ENCODE measurements at regions of chr9 and their contacts with region 1.

Region 1: GRCh38 chr9:18255158-18255629 is 218.8 kb upstream of the ADAMTSL1 start:
- DNase-seq: peak; percentile 88
- ATAC-seq: peak; percentile 66
- H3K4me3 ChIP-seq: no peak overlapping the region
- H3K27ac ChIP-seq: peak overlapping the region; percentile 71
- H3K4me1 ChIP-seq: peaks cover 26% of the 10 kb centered on the region
- H3K27me3 ChIP-seq: no peaks in the 10 kb centered on the region
- CTCF ChIP-seq: peak; percentile 90

Region 2: GRCh38 chr9:18238254-18238653 is 16.9 kb before region 1 on chr9:
- CTCF ChIA-PET with region 1: interaction called, 3 read pairs
- POLR2A ChIA-PET with region 1: no interaction called
- intact Hi-C with region 1: loop called (anchors 1 kb)
- DNase-seq: peak; percentile 86
- ATAC-seq: peak; percentile 86
- H3K4me3 ChIP-seq: peak overlapping the region; percentile 51
- H3K27ac ChIP-seq: peak overlapping the region; percentile 99
- H3K4me1 ChIP-seq: peaks cover 55% of the 10 kb centered on the region
- H3K27me3 ChIP-seq: no peaks in the 10 kb centered on the region
- CTCF ChIP-seq: no peak

Region 3: GRCh38 chr9:18274693-18275092 is 19.5 kb after region 1 on chr9:
- CTCF ChIA-PET with region 1: no interaction called
- POLR2A ChIA-PET with region 1: no interaction called
- intact Hi-C with region 1: no loop called
- DNase-seq: peak; percentile 14
- ATAC-seq: no peak
- H3K4me3 ChIP-seq: no peak overlapping the region
- H3K27ac ChIP-seq: no peak overlapping the region
- H3K4me1 ChIP-seq: no peaks in the 10 kb centered on the region
- H3K27me3 ChIP-seq: no peaks in the 10 kb centered on the region
- CTCF ChIP-seq: no peak

Region 4: DNA sequence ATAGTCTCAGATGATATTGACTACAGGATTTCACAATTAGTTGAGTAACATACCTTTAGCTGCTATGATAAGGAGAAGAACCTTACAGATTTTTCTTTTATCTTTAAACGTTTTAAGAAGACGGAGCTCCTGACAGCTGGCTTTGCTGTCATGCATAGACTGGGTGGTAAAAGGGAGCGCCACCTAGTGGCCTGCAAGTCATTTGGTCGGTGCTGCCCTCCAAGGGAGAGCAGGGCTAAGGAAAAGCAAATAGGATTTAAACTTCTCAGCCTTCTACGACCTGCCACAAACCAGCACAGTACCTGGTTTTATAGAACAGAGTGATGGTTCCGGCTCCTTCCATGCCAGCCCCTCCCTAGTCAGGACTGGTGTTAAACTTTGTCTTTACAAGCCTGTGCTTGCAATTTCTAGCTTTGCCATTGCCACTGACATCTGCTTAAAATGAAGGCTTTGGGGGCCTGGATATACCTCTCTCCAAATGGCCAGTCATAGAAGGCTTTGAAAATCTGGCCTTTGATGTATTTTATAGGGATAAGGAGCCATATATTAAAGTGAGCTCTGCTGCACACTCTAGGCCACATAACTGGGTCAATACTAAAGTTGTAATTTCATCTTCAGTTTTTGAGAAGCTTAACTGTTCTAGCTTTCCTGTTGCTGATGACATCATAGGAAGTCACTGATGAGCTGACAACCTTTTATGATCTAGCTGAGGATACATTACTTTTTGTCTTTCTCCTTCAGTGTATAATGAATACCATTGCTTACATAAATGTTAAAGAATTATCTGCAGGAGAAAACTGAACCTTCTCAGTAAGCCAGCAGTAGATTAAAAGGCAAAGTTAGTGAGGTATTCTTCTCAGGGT is 187.7 kb after region 1 on chr9:
- CTCF ChIA-PET with region 1: interaction called, 4 read pairs
- POLR2A ChIA-PET with region 1: no interaction called
- intact Hi-C with region 1: loop called (anchors 1 kb)
- DNase-seq: peak; percentile 71
- ATAC-seq: peak; percentile 97
- H3K4me3 ChIP-seq: no peak overlapping the region
- H3K27ac ChIP-seq: no peak overlapping the region
- H3K4me1 ChIP-seq: peaks cover 17% of the 10 kb centered on the region; the same call in 1 of the 2 replicates
- H3K27me3 ChIP-seq: no peaks in the 10 kb centered on the region
- CTCF ChIP-seq: peak; percentile 91

Region 5: DNA sequence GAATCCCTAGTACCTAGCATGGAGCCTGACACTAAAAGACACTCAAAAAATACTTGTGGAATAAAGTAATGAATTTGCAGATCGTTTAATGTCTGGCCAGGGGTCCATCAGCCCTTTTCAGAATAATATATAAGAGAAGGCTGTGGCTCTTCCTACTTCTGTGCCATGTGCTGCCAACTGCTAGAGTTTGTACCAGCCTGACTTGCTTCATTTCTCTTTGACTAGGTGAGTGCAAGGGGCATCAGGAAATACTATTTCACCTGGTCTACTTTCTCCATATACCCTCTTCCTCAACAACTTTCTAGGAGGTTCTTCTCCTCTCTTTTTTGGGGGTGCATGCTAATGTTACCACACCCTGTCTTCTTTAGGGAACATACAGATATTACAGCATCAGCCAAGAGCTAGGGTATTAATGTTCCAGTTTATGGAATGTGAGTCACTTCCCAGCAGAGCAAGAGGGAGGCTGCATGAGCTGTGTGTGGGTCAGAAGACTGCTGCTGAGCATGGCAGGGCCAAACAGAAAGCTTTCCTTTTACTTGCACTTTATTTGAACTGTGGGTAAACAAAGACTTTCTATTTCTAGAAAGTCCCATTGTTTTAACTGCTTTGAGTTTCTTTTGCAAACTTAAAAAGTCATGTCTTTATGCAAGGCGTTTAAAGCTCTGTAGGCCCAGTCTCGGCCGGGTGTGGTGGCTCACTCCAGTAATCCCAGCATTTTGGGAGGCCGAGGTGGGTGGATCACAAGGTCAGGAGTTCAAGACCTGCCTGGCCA is 377.6 kb after region 1 on chr9:
- CTCF ChIA-PET with region 1: no interaction called
- POLR2A ChIA-PET with region 1: no interaction called
- intact Hi-C with region 1: loop called (anchors 2 kb)
- DNase-seq: peak; percentile 82
- ATAC-seq: peak; percentile 100
- H3K4me3 ChIP-seq: no peak overlapping the region
- H3K27ac ChIP-seq: peak overlapping the region; percentile 90
- H3K4me1 ChIP-seq: peaks cover 18% of the 10 kb centered on the region
- H3K27me3 ChIP-seq: no peaks in the 10 kb centered on the region
- CTCF ChIP-seq: no peak

Region 6: DNA sequence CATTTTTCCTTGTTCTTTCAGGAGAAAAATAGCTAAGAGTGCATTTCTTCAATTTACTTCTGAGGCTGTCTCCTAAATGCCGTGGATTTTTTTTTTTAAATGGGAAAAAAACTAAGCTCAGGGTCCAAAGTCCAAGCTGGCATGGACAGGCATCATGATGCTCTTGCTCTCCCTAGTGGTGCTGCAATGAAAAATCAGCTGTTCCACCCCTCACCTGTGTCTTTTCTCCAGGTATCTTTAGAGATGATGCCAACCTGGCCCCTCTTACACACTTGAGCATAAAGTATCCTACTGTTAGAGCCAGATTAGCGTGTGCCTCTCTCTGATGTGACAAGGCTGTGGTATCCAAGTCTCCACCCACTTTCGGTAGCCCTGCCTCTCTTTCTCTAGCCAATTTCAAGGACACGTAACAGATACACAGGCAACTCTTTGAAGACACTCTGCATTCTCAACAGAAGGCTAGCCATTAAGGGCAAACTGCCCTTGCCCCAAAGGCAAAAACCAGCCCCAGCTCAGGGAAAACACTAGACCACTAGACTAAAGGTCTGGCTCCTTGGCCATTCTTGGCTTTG is 569.0 kb after region 1 on chr9:
- CTCF ChIA-PET with region 1: interaction called, 12 read pairs
- POLR2A ChIA-PET with region 1: no interaction called
- intact Hi-C with region 1: loop called (anchors 1 kb)
- DNase-seq: peak; percentile 66
- ATAC-seq: peak; percentile 52; the same call in 1 of the 2 replicates
- H3K4me3 ChIP-seq: no peak overlapping the region
- H3K27ac ChIP-seq: no peak overlapping the region
- H3K4me1 ChIP-seq: peaks cover 21% of the 10 kb centered on the region
- H3K27me3 ChIP-seq: no peaks in the 10 kb centered on the region
- CTCF ChIP-seq: peak; percentile 71

Region 7: DNA sequence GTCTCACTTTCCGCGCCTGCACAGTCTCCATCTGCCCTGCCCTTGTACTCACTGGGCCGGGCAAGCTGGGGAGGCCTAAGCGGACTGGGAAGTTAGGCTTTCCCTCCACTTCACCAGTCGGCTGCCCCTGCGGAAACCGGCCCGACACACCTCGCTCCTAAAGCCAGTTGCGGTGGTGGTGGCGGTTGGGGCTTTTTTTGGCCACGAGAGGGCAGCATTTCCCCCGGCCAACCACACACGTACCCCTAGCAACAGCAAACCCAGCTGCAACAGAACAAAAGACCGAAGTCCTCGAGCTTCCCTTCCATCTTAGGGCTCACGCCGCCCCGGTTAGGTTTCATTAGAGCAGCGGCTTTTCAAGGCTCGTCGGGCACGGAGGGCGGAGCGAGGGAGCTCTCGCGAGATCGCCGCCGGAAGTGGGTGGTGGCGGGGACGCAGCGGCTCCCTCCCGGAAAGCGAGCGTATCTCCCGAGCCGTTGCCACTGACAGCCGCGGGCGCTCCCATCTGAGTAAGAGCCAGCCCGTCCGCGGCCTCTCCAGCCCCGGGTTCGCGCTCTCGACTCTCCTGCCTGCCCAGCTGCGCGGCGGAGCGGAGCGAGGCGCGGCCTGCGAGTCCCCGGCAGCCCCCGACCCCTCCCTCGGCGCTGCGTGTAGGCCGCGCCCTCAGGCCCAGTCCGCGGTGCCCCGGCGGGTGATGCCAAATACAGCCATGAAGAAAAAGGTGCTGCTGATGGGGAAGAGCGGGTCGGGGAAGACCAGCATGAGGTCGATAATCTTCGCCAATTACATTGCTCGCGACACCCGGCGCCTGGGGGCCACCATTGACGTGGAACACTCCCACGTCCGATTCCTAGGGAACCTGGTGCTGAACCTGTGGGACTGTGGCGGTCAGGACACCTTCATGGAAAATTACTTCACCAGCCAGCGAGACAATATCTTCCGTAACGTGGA is 794.0 kb after region 1 on chr9 and contains the start of gene RRAGA:
- CTCF ChIA-PET with region 1: no interaction called
- POLR2A ChIA-PET with region 1: interaction called, 10 read pairs
- intact Hi-C with region 1: no loop called
- DNase-seq: peak; percentile 92
- ATAC-seq: peak; percentile 83
- H3K4me3 ChIP-seq: peak within 1 kb of the TSS; percentile 89
- H3K27ac ChIP-seq: peak within 1 kb of the TSS; percentile 68
- H3K4me1 ChIP-seq: peaks cover 15% of the 10 kb centered on the region; the same call in 1 of the 2 replicates
- H3K27me3 ChIP-seq: no peaks in the 10 kb centered on the region
- CTCF ChIP-seq: peak; percentile 76
- total RNA-seq, gene RRAGA: 13.0 and 16.8 TPM in 2 replicates

Measured in PC-3 (cell line).